B cell (primary cell): ENCODE measurements at regions of chr19 and their contacts with region 1.

Region 1: GRCh38 chr19:38831142-38831605 is 420 bp downstream of the ECH1 start:
- DNase-seq: no peak
- ATAC-seq: peak; percentile 12
- H3K4me3 ChIP-seq: peak overlapping the region; percentile 62 to 100 (median 69)
- H3K4me3 Mint-ChIP-seq: peak overlapping the region; percentile 96
- H3K27ac ChIP-seq: peak overlapping the region; percentile 30 to 83
- H3K27ac Mint-ChIP-seq: peak overlapping the region; percentile 94
- H3K4me1 ChIP-seq: peaks cover 10 to 18% of the 10 kb centered on the region in 2 donors
- H3K4me1 Mint-ChIP-seq: peaks cover 25% of the 10 kb centered on the region
- H3K27me3 ChIP-seq: no peaks in the 10 kb centered on the region
- H3K27me3 Mint-ChIP-seq: no peaks in the 10 kb centered on the region
- CTCF ChIP-seq: no peak

Region 2: GRCh38 chr19:38647368-38647965 is 183.7 kb before region 1 on chr19 and contains the start of gene ACTN4:
- CTCF ChIA-PET with region 1: interaction called, 3 read pairs
- POLR2A ChIA-PET with region 1: interaction called, 4 read pairs
- intact Hi-C with region 1: loop called (anchors 1 kb)
- DNase-seq: peak; percentile 100
- ATAC-seq: peak; percentile 94
- H3K4me3 ChIP-seq: peak within 1 kb of the TSS; percentile 82 to 96 (median 91)
- H3K4me3 Mint-ChIP-seq: peak within 1 kb of the TSS; percentile 90
- H3K27ac ChIP-seq: peak within 1 kb of the TSS; percentile 40 to 68
- H3K27ac Mint-ChIP-seq: peak within 1 kb of the TSS; percentile 93
- H3K4me1 ChIP-seq: peaks cover 21 to 31% of the 10 kb centered on the region in 2 donors
- H3K4me1 Mint-ChIP-seq: peaks cover 37% of the 10 kb centered on the region
- H3K27me3 ChIP-seq: no peaks in the 10 kb centered on the region
- H3K27me3 Mint-ChIP-seq: no peaks in the 10 kb centered on the region
- CTCF ChIP-seq: no peak
- total RNA-seq, gene ACTN4: 154 and 164 TPM in 2 replicates

Region 3: DNA sequence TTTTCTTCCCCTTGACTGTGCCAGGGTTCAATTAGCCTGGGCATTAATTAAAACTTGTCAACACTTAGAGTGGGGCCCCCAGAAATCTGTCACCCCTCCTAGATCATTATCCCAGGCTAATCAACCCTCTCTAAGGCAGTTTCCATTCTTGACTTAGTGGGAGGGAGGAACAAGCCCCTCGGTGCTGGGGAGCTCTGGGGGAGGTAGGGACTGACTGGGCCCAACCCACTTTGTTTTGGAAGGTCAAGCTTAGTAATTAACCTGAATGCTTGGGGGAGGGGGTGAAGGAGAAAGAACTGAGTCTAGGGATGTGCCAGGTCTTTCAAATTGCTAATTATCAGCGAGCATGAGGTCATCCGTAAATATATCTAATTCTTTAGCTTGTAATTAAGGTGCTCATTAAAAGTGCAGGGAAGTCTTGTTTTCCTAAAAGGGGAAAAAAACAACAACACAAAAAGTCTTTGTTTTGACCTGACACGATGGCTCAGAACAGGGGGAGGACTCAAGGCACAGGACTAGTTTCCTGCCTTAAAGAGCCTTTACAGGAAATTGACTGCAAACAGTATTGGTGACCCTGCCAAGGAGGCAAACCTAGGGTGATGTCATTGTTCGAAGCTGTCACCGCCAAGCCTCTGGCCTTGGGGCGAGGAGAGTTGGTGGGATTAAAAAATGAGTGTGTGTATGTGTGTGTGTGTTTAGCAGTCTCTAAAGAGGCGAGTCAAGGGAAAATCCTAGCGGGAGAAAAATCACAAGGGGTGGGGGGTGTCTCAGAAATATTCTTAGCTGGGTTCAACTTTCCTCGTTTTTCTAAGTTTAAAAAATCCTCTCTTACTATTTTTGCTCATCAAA is 164.3 kb before region 1 on chr19:
- CTCF ChIA-PET with region 1: no interaction called
- POLR2A ChIA-PET with region 1: no interaction called
- intact Hi-C with region 1: no loop called
- DNase-seq: peak; percentile 50
- ATAC-seq: peak; percentile 59
- H3K4me3 ChIP-seq: peak overlapping the region in 4 of 5 experiments; percentile 19 to 56 (median 38)
- H3K4me3 Mint-ChIP-seq: peak overlapping the region; percentile 88
- H3K27ac ChIP-seq: peak overlapping the region; percentile 76 to 89
- H3K27ac Mint-ChIP-seq: peak overlapping the region; percentile 95
- H3K4me1 ChIP-seq: peaks cover 65 to 72% of the 10 kb centered on the region in 2 donors
- H3K4me1 Mint-ChIP-seq: peaks cover 76% of the 10 kb centered on the region
- H3K27me3 ChIP-seq: no peaks in the 10 kb centered on the region
- H3K27me3 Mint-ChIP-seq: no peaks in the 10 kb centered on the region
- CTCF ChIP-seq: no peak

Region 4: DNA sequence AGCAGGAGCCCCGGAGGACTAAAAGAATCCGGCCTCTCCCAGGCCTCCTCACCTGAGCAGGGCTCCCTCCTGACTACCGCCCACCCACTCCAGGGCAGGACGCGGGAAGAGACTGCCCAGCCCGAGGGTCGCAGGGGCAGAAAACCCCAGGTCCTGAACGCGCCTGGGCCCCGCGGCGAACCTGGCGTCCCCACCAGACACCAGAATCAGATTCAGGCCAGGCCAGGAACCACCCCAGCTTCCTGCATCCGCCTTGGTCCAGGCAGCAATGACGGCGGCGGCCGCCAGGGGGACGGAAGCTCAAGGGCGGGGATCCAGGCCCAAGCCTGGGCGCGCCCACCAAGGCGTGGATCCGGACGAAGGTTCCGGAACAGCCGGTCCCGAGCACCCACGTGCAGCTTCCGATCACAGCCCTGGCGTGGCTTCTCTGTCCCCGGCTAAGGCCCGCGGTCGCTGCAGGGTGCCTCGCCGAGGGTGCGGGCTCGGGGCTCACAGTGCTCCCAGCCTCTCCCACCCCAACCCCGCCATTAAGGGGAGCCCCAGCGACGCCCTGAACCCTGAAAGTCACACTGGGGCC is 61.5 kb before region 1 on chr19:
- CTCF ChIA-PET with region 1: interaction called, 12 read pairs
- POLR2A ChIA-PET with region 1: interaction called, 8 read pairs
- intact Hi-C with region 1: loop called (anchors 2 kb)
- DNase-seq: peak; percentile 95
- ATAC-seq: peak; percentile 91
- H3K4me3 ChIP-seq: peak overlapping the region in 4 of 5 experiments; percentile 40 to 59 (median 47)
- H3K4me3 Mint-ChIP-seq: peak overlapping the region; percentile 81
- H3K27ac ChIP-seq: peak overlapping the region; percentile 75 to 77
- H3K27ac Mint-ChIP-seq: peak overlapping the region; percentile 89
- H3K4me1 ChIP-seq: peaks cover 6 to 12% of the 10 kb centered on the region in 2 donors
- H3K4me1 Mint-ChIP-seq: peaks cover 11% of the 10 kb centered on the region
- H3K27me3 ChIP-seq: no peaks in the 10 kb centered on the region
- H3K27me3 Mint-ChIP-seq: no peaks in the 10 kb centered on the region
- CTCF ChIP-seq: peak; percentile 86

Region 5: GRCh38 chr19:38815059-38816001 is 15.8 kb before region 1 on chr19:
- CTCF ChIA-PET with region 1: no interaction called
- POLR2A ChIA-PET with region 1: no interaction called
- intact Hi-C with region 1: no loop called
- DNase-seq: no peak
- ATAC-seq: no peak
- H3K4me3 ChIP-seq: no peak overlapping the region
- H3K4me3 Mint-ChIP-seq: no peak overlapping the region
- H3K27ac ChIP-seq: no peak overlapping the region
- H3K27ac Mint-ChIP-seq: peak overlapping the region; percentile 32
- H3K4me1 ChIP-seq: no peaks in the 10 kb centered on the region
- H3K4me1 Mint-ChIP-seq: peaks cover 2% of the 10 kb centered on the region
- H3K27me3 ChIP-seq: no peaks in the 10 kb centered on the region
- H3K27me3 Mint-ChIP-seq: no peaks in the 10 kb centered on the region
- CTCF ChIP-seq: no peak

Region 6: DNA sequence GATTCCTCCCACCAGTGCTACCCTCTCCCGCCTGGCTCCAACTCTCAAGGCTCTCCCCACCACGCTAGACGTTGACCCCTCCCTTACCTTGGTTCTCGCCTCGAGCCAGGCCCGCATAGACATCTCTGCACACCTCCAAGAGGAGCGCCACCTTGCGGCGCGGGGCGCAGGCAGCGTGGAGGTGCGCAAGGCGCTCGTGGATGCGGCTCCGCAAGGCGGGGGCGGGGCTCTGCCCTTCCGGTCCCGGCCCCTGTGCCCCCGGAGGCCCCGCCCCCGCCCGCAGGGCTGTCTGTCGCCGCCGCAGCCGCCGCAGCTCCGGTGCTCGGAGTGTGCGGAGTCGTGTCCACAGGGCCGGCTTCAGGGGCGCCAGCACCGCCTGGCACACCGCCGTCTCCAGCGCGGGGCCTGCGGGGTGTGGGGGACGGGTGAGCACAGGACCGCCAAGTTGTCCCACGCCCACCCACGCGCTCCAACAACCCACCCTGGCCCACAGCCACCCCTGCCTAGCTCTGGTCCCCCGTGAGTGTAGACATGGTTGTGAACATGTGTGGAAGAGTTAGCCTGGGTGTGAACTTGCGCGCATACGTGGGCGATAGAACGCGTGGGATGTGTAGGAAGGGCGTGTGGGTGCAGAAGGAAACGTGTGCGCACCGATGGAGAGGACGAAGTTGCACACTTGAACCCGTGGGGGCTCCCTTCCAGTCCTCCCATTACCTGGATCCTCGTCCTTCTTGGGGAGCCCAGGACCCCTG is 38.9 kb after region 1 on chr19:
- CTCF ChIA-PET with region 1: interaction called, 19 read pairs
- POLR2A ChIA-PET with region 1: interaction called, 16 read pairs
- intact Hi-C with region 1: loop called (anchors 1 kb)
- DNase-seq: peak; percentile 97
- ATAC-seq: peak; percentile 87
- H3K4me3 ChIP-seq: peak overlapping the region; percentile 70 to 97 (median 86)
- H3K4me3 Mint-ChIP-seq: peak overlapping the region; percentile 95
- H3K27ac ChIP-seq: peak overlapping the region; percentile 72 to 76
- H3K27ac Mint-ChIP-seq: peak overlapping the region; percentile 92
- H3K4me1 ChIP-seq: peaks cover 39 to 53% of the 10 kb centered on the region in 2 donors
- H3K4me1 Mint-ChIP-seq: peaks cover 54% of the 10 kb centered on the region
- H3K27me3 ChIP-seq: no peaks in the 10 kb centered on the region
- H3K27me3 Mint-ChIP-seq: no peaks in the 10 kb centered on the region
- CTCF ChIP-seq: peak; percentile 86

Region 7: DNA sequence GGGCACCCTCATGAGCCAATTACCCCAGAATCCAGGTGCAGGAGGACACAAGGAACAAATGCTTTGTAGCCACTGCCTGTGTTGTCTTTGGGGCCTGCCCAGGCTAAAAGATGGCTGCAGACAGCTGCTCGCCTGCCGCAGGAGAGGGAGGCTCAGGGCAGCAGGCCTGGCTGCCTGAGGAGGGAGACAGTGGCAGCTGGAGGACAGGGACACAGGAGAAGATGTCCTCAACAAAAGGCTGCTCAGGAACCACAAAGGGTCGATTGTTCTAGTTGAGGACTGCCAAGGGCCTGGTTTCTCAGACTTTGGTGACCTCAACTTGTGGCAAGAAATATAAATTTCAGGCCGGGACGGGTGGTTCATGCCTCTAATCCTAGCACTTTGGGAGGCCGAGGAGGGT is 60.6 kb after region 1 on chr19:
- CTCF ChIA-PET with region 1: interaction called, 23 read pairs
- POLR2A ChIA-PET with region 1: no interaction called
- intact Hi-C with region 1: loop called (anchors 2 kb)
- DNase-seq: no peak
- ATAC-seq: no peak
- H3K4me3 ChIP-seq: no peak overlapping the region
- H3K4me3 Mint-ChIP-seq: no peak overlapping the region
- H3K27ac ChIP-seq: no peak overlapping the region
- H3K27ac Mint-ChIP-seq: no peak overlapping the region
- H3K4me1 ChIP-seq: peaks cover 3 to 11% of the 10 kb centered on the region in 2 donors
- H3K4me1 Mint-ChIP-seq: peaks cover 4% of the 10 kb centered on the region
- H3K27me3 ChIP-seq: no peaks in the 10 kb centered on the region
- H3K27me3 Mint-ChIP-seq: no peaks in the 10 kb centered on the region
- CTCF ChIP-seq: no peak